Activated CD8-positive, alpha-beta T cell treated with anti-CD3 and anti-CD28 coated beads, Interleukin-2, amount 10 ng/mL, durations not matched to agents 7 days and 5 days (primary cell): ENCODE measurements at regions of chr17 and their contacts with region 1.

Region 1: GRCh38 chr17:45277216-45277849 is 15.4 kb upstream of the SPATA32 start:
- DNase-seq: peak; percentile 93
- ATAC-seq: peak; percentile 91
- H3K4me3 Mint-ChIP-seq: no peak overlapping the region
- H3K27ac Mint-ChIP-seq: peak overlapping the region; percentile 3
- H3K4me1 Mint-ChIP-seq: peaks cover 17% of the 10 kb centered on the region
- H3K27me3 Mint-ChIP-seq: no peaks in the 10 kb centered on the region

Region 2: GRCh38 chr17:44968226-44969143 is 308.8 kb before region 1 on chr17 and contains the start of gene C1QL1:
- CTCF ChIA-PET with region 1: no interaction called
- POLR2A ChIA-PET with region 1: no interaction called
- DNase-seq: peak; percentile 90
- ATAC-seq: peak; percentile 97
- H3K4me3 Mint-ChIP-seq: peak within 1 kb of the TSS; percentile 59
- H3K27ac Mint-ChIP-seq: no peak within 1 kb of the TSS
- H3K4me1 Mint-ChIP-seq: peaks cover 31% of the 10 kb centered on the region
- H3K27me3 Mint-ChIP-seq: peaks cover 70% of the 10 kb centered on the region
- total RNA-seq, gene C1QL1: 0.34 to 0.68 TPM

Region 3: GRCh38 chr17:45235416-45236281 is 41.7 kb before region 1 on chr17:
- CTCF ChIA-PET with region 1: interaction called, 14 read pairs
- POLR2A ChIA-PET with region 1: no interaction called
- DNase-seq: peak; percentile 86
- ATAC-seq: peak; percentile 68
- H3K4me3 Mint-ChIP-seq: no peak overlapping the region
- H3K27ac Mint-ChIP-seq: peak overlapping the region; percentile 60
- H3K4me1 Mint-ChIP-seq: peaks cover 62% of the 10 kb centered on the region
- H3K27me3 Mint-ChIP-seq: no peaks in the 10 kb centered on the region

Region 4: GRCh38 chr17:45256114-45256966 is 21.0 kb before region 1 on chr17:
- CTCF ChIA-PET with region 1: interaction called, 13 read pairs
- POLR2A ChIA-PET with region 1: no interaction called
- DNase-seq: peak; percentile 35
- ATAC-seq: peak; percentile 58
- H3K4me3 Mint-ChIP-seq: peak overlapping the region; percentile 45
- H3K27ac Mint-ChIP-seq: peak overlapping the region; percentile 78
- H3K4me1 Mint-ChIP-seq: peaks cover 65% of the 10 kb centered on the region
- H3K27me3 Mint-ChIP-seq: no peaks in the 10 kb centered on the region

Region 5: DNA sequence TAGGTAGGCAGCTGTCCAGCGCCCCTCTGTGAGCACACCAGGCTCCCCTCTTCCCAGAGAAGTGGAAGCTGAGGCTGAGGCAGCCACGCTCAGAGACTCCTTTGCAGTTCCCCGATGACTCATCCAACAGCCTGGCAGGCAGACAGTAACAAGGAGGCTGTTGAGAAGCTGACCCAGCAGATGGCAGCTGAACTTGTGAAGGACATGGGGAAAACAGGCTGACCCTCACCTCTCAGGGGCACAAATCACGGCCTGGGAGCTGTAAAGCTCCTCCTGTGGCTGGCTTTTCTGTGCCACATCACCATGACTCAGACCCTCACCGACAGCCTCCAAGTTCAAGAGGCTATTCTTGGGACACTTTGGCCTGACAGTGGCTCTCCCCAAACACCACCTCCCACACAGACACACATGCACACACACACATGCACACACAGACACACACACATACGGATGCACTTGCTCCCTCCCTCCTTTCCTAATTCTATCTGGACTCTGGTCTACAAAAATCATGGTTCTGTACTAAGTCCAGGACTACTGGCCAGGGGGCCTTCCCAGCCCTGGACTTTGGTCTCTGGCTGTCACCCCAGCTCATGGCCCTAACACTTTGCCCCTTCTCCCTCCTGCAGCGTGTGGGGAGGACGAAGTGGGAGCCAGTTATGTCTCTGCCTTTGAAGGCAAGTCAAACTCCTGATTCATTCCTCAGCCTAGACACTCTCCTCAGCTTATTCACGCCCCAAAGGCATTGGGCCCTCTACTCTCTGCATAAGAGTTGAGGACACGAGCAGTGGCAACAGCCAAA is 16.3 kb after region 1 on chr17:
- CTCF ChIA-PET with region 1: interaction called, 41 read pairs
- POLR2A ChIA-PET with region 1: interaction called, 3 read pairs
- DNase-seq: no peak
- ATAC-seq: no peak
- H3K4me3 Mint-ChIP-seq: no peak overlapping the region
- H3K27ac Mint-ChIP-seq: peak overlapping the region; percentile 67
- H3K4me1 Mint-ChIP-seq: peaks cover 88% of the 10 kb centered on the region
- H3K27me3 Mint-ChIP-seq: no peaks in the 10 kb centered on the region

Region 6: DNA sequence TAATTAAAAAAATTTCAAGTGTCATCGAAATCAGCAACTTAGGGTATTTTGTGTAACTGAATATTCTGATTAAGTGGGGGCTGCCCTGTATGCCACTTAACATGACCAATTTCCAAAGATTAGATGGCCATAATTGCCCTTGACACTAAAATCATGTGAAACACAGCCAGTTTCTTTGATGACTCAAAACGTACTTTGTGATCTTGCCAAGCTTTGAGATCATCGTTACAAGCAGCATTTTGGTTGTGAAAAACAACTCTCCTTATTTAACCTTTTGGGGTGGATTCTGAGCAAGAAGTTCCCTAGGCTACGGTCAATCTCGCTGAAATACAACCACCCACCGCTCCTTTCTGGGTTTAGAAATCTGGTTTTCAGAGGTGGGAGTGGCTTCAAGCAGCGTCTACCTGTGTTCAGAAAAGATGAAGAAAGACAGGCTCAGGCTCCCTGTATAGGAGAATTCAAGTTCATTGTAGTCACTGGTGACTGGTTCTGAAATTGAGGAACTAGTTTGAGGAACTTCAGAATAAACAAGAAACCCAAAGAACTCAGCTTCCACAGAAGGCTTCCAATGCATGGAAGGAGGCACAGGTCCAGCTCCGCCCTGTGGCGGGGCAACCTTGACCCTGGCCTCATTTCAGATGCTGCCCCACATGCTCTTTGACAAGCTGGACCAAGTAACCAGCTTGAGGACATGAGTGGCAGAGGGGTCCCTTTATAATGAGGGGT is 30.1 kb after region 1 on chr17:
- CTCF ChIA-PET with region 1: interaction called, 69 read pairs
- POLR2A ChIA-PET with region 1: interaction called, 17 read pairs
- DNase-seq: peak; percentile 56
- ATAC-seq: peak; percentile 30
- H3K4me3 Mint-ChIP-seq: no peak overlapping the region
- H3K27ac Mint-ChIP-seq: peak overlapping the region; percentile 82
- H3K4me1 Mint-ChIP-seq: peaks cover 82% of the 10 kb centered on the region
- H3K27me3 Mint-ChIP-seq: no peaks in the 10 kb centered on the region

Region 7: GRCh38 chr17:45371414-45372327 is 94.3 kb after region 1 on chr17:
- CTCF ChIA-PET with region 1: interaction called, 13 read pairs
- POLR2A ChIA-PET with region 1: no interaction called
- DNase-seq: no peak
- ATAC-seq: peak; percentile 77
- H3K4me3 Mint-ChIP-seq: peak overlapping the region; percentile 22
- H3K27ac Mint-ChIP-seq: peak overlapping the region; percentile 28
- H3K4me1 Mint-ChIP-seq: peaks cover 13% of the 10 kb centered on the region
- H3K27me3 Mint-ChIP-seq: peaks cover 14% of the 10 kb centered on the region

Region 8: DNA sequence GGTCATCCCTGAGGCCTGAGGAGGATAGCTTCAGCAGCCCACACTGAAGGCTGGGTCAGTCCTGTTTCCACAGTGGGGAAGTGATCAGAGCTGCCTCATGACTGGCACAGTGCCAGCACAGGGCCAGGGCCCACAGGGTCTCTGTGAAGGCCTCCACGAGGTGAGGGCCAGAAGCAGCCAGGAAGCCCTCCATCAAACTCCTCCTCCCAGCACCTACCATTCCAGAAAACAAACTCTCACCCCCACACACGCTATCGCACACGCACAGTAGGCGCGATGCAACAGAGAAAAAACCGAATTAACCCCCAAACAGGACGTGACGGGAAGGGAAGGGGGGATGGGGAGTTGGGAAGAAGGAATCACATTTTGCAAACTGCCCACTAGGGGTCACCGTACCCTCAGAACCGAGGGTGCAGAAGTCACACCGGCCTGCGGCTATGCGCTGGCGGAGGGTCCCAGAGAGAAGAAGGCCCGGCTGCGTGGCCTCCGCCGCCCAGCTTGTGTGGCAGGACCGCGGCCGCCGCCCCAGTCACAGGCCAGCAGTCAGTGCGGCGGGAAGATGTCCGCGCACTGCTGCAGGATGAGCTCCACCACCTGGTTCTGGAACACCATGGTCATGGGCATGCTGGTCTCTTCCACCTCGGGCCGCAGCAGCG is 117.7 kb after region 1 on chr17:
- CTCF ChIA-PET with region 1: interaction called, 199 read pairs
- POLR2A ChIA-PET with region 1: no interaction called
- DNase-seq: peak; percentile 52
- ATAC-seq: peak; percentile 46
- H3K4me3 Mint-ChIP-seq: no peak overlapping the region
- H3K27ac Mint-ChIP-seq: no peak overlapping the region
- H3K4me1 Mint-ChIP-seq: peaks cover 8% of the 10 kb centered on the region
- H3K27me3 Mint-ChIP-seq: peaks cover 6% of the 10 kb centered on the region